ENCODE measurements at regions of chr11 and their contacts with region 1.

Region 1: GRCh38 chr11:119381181-119381988 is at the start of gene USP2:
- DNase-seq: peak; percentile 96
- H3K4me3 Mint-ChIP-seq: no peak within 1 kb of the TSS
- H3K27ac Mint-ChIP-seq: no peak within 1 kb of the TSS
- H3K4me1 Mint-ChIP-seq: no peaks in the 10 kb centered on the region
- H3K27me3 Mint-ChIP-seq: peaks cover 5% of the 10 kb centered on the region
- total RNA-seq, gene USP2: 0.48 to 0.53 TPM

Region 2: DNA sequence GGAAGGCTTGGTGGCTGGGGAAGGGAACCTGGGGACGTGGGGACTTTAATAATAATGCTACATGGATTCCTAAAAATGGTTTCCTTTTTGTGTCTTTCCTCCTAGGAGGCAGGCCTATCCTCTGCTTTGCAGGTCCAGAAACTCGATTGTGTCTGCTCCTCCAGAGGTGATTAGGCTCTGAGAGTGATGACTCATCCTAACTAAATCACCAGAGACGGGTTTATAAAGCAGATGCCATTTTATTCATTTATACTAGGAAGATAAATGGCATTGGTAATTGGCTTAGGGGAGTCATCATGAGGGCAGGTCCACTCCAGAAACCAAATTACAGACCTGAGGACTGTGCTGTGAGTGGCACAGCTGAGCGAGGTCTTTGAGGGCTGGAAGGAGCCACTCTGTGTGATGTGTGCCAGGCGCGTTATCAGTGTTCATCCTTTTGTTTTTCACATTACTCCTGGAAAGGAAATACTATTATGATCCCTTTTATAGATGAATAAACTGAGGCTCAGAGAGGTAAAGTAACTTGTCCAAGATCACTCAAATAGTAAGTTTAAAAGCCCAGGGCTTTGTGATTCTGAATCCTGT is 205.8 kb before region 1 on chr11:
- CTCF ChIA-PET with region 1: no interaction called
- POLR2A ChIA-PET with region 1: no interaction called
- DNase-seq: no peak
- H3K4me3 Mint-ChIP-seq: no peak overlapping the region
- H3K27ac Mint-ChIP-seq: peak overlapping the region; percentile 33
- H3K4me1 Mint-ChIP-seq: peaks cover 30% of the 10 kb centered on the region
- H3K27me3 Mint-ChIP-seq: no peaks in the 10 kb centered on the region

Region 3: GRCh38 chr11:119236490-119236889 is 144.9 kb before region 1 on chr11:
- CTCF ChIA-PET with region 1: no interaction called
- POLR2A ChIA-PET with region 1: no interaction called
- DNase-seq: no peak
- H3K4me3 Mint-ChIP-seq: no peak overlapping the region
- H3K27ac Mint-ChIP-seq: peak overlapping the region; percentile 32
- H3K4me1 Mint-ChIP-seq: peaks cover 40% of the 10 kb centered on the region
- H3K27me3 Mint-ChIP-seq: no peaks in the 10 kb centered on the region

Region 4: GRCh38 chr11:119474682-119475596 is 93.6 kb after region 1 on chr11:
- CTCF ChIA-PET with region 1: interaction called, 28 read pairs
- POLR2A ChIA-PET with region 1: interaction called, 3 read pairs
- DNase-seq: peak; percentile 61
- H3K4me3 Mint-ChIP-seq: no peak overlapping the region
- H3K27ac Mint-ChIP-seq: no peak overlapping the region
- H3K4me1 Mint-ChIP-seq: no peaks in the 10 kb centered on the region
- H3K27me3 Mint-ChIP-seq: peaks cover 12% of the 10 kb centered on the region

Measured in activated CD4-positive, alpha-beta memory T cell treated with anti-CD3 and anti-CD28 coated beads, Interleukin-2, amount 10 ng/mL, durations not matched to agents 7 days and 5 days (primary cell).